Tibial artery (tissue), 4 donors: ENCODE measurements at regions of chr16 and their contacts with region 1.

Region 1: GRCh38 chr16:21300309-21301167 is 22.4 kb upstream of the CRYM start:
- DNase-seq: peak; percentile 98 to 100
- H3K4me3 ChIP-seq: peak overlapping the region; percentile 57 to 89
- H3K27ac ChIP-seq: peak overlapping the region; percentile 70 to 83
- H3K4me1 ChIP-seq: peaks cover 0 to 9% (median 8%) of the 10 kb centered on the region in 4 donors
- H3K27me3 ChIP-seq: peaks cover 0 to 3% of the 10 kb centered on the region in 2 donors
- CTCF ChIP-seq: peak; percentile 80 to 85

Region 2: GRCh38 chr16:21158208-21159110 is 142.1 kb before region 1 on chr16 and contains the start of gene LDAF1:
- intact Hi-C with region 1: loop called (anchors 5 kb)
- DNase-seq: peak; percentile 88 to 94
- H3K4me3 ChIP-seq: peak within 1 kb of the TSS; percentile 75 to 91
- H3K27ac ChIP-seq: peak within 1 kb of the TSS; percentile 86 to 92
- H3K4me1 ChIP-seq: peaks cover 0 to 54% (median 40%) of the 10 kb centered on the region in 4 donors
- H3K27me3 ChIP-seq: no peaks in the 10 kb centered on the region
- CTCF ChIP-seq: no peak

Region 3: DNA sequence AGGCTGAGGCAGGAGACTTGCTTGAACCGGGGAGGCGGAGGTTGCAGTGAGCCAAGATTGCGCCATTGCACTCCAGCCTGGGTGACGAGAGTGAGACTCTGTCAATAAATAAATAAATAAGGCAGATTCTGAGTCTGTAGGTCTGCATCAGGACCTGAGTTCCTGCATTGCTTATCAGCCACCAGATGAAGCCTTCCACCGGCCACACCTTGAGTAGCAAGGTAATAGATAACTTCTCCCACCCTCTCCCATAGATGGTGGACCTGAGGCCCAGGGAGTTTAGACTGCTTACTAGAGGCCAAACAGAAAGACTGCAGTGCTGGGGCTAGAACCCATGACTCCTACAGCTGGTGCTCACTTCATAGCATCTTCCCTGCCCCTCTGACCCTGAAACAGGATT is 111.2 kb before region 1 on chr16:
- intact Hi-C with region 1: loop called (anchors 2 kb)
- DNase-seq: no peak
- H3K4me3 ChIP-seq: no peak overlapping the region
- H3K27ac ChIP-seq: no peak overlapping the region
- H3K4me1 ChIP-seq: peaks cover 0 to 6% (median 5%) of the 10 kb centered on the region in 4 donors
- H3K27me3 ChIP-seq: no peaks in the 10 kb centered on the region
- CTCF ChIP-seq: no peak

Region 4: GRCh38 chr16:21244518-21245215 is 55.9 kb before region 1 on chr16:
- intact Hi-C with region 1: no loop called
- DNase-seq: no peak
- H3K4me3 ChIP-seq: no peak overlapping the region
- H3K27ac ChIP-seq: no peak overlapping the region
- H3K4me1 ChIP-seq: peaks cover 0 to 7% (median 0%) of the 10 kb centered on the region in 4 donors
- H3K27me3 ChIP-seq: peaks cover 0 to 7% of the 10 kb centered on the region in 2 donors
- CTCF ChIP-seq: no peak

Region 5: GRCh38 chr16:21523411-21524067 is 223.0 kb after region 1 on chr16:
- intact Hi-C with region 1: loop called (anchors 5 kb)
- DNase-seq: no peak
- H3K4me3 ChIP-seq: no peak overlapping the region
- H3K27ac ChIP-seq: no peak overlapping the region
- H3K4me1 ChIP-seq: peaks cover 0 to 8% (median 2%) of the 10 kb centered on the region in 4 donors
- H3K27me3 ChIP-seq: no peaks in the 10 kb centered on the region
- CTCF ChIP-seq: no peak